ENCODE measurements at regions of chr6 and their contacts with region 1.

Region 1: DNA sequence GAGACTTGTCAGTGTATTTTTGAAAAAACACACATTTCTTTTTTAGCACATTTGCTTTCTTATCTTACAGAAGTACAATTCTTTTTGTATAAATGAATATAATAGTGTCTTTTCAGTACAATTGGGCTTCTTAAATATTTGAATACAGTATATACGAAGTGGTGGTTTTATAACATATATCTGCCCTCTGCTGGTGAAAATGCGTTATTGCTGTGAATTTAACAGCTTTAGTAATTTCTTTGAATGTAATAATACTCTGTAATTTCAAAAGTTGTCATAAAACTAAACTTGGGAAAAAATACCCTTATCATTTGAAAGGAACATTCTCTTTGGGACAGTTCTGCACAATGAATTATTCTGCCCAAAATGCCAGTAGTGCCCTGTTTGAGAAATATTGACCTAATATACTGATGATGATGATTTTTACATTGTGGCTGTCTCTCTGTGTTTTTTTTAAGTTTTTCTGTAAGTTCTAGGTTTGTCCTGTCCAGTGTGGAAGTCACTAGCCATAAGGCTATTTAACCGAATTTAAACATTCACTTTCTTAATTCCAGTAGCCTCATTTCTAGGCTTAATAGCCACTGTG is 19.0 kb downstream of the SMAP1 start:
- DNase-seq: no peak
- ATAC-seq: peak; percentile 75

Region 2: DNA sequence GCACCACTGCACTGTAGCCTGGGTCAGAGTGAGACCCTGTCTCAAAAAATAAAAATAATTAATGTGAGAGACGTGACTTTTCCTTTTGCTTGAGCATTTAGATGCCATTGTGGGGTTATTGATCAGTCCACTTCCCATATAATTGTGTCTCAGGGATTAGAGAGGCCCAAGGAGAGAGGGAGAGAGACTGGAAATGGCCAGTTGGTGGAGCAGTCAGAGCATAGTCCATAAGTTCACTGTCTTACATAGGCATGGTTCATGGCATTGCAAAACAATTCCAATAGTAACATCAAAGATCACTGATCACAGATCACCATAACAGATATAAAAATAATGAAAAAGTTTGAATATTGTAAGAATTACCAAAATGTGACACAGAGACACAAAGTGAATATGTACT is 135.1 kb before region 1 on chr6:
- intact Hi-C with region 1: loop called (anchors 10 kb)
- DNase-seq: no peak
- ATAC-seq: no peak

Measured in Right ventricle myocardium superior (tissue), 1 donor.